Panc1 (cell line): ENCODE measurements at regions of chr12 and their contacts with region 1.

Region 1: DNA sequence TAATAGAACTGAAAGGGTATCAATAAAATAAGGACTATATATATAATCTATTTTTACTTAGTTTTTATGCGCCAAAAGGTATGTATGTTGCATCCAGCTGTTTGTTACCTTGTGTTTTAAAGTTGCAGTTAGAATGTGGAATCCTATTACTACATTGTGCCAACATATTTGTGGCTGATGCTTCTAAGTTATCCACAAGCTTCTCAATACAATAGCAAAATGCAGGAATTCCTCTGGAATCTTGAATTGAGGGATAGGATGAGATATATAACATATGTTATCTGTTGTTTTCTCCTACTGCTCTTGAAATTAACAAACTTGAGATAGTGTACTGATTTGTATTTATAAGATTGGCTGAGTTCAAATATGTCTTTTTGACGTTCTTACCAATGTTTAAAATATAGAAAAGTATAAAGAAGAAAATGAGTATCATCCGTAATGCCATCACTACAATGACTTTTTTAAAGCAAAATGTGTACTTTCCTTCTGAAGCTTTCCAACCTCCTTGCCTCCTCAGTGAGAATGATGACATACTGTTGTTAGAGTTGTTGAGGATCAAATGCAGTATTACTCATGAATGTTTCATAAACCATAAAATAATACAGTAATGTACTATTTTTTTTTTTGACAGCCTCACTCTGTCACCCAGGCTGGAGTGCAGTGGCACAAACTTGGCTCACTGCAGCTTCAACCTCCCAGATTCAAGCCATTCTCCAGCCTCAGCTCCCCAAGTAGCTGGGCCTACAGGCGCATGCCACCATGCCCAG is 6.6 kb downstream of the RAP1B start:
- DNase-seq: no peak
- ATAC-seq: no peak
- H3K4me3 ChIP-seq: no peak overlapping the region
- H3K27ac ChIP-seq: peak overlapping the region; percentile 76
- H3K4me1 ChIP-seq: peaks cover 68% of the 10 kb centered on the region
- H3K27me3 ChIP-seq: no peaks in the 10 kb centered on the region
- CTCF ChIP-seq: no peak

Region 2: GRCh38 chr12:68572661-68573060 is 44.7 kb before region 1 on chr12:
- CTCF ChIA-PET with region 1: interaction called, 12 read pairs
- POLR2A ChIA-PET with region 1: no interaction called
- in situ Hi-C with region 1: no loop called
- intact Hi-C with region 1: no loop called
- DNase-seq: no peak
- ATAC-seq: no peak
- H3K4me3 ChIP-seq: no peak overlapping the region
- H3K27ac ChIP-seq: peak overlapping the region; percentile 75; the same call in 1 of the 2 replicates
- H3K4me1 ChIP-seq: no peaks in the 10 kb centered on the region
- H3K27me3 ChIP-seq: no peaks in the 10 kb centered on the region
- CTCF ChIP-seq: no peak

Region 3: DNA sequence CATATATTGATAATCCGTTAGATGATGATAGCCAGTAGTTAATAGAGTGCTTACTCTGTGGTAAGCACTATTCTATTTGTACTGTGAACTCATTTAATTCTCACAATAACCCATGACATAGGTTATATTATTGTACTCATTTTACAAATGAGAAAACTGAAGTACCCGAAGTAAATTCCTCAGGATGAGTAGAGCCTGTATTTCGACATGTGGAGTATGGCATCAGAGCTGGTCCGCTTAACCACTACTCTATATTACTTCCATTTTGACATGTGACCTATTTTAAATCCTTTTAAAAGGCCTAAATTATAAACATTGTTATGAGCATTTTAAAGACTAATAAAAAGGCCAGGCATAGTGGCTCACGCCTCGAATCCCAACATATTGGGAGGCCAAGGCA is 14.6 kb before region 1 on chr12:
- CTCF ChIA-PET with region 1: no interaction called
- POLR2A ChIA-PET with region 1: interaction called, 23 read pairs
- in situ Hi-C with region 1: no loop called
- intact Hi-C with region 1: no loop called
- DNase-seq: no peak
- ATAC-seq: peak; percentile 29; the same call in 1 of the 2 replicates
- H3K4me3 ChIP-seq: no peak overlapping the region
- H3K27ac ChIP-seq: peak overlapping the region; percentile 85
- H3K4me1 ChIP-seq: peaks cover 23% of the 10 kb centered on the region
- H3K27me3 ChIP-seq: no peaks in the 10 kb centered on the region
- CTCF ChIP-seq: no peak